Activated naive CD4-positive, alpha-beta T cell treated with anti-CD3 and anti-CD28 coated beads for 36 hours (primary cell): ENCODE measurements at regions of chr3 and their contacts with region 1.

Region 1: GRCh38 chr3:16950845-16951244 is 66.1 kb downstream of the PLCL2 start:
- DNase-seq: no peak
- H3K4me3 Mint-ChIP-seq: no peak overlapping the region
- H3K27ac Mint-ChIP-seq: no peak overlapping the region
- H3K4me1 Mint-ChIP-seq: peaks cover 40% of the 10 kb centered on the region
- H3K27me3 Mint-ChIP-seq: no peaks in the 10 kb centered on the region

Region 2: DNA sequence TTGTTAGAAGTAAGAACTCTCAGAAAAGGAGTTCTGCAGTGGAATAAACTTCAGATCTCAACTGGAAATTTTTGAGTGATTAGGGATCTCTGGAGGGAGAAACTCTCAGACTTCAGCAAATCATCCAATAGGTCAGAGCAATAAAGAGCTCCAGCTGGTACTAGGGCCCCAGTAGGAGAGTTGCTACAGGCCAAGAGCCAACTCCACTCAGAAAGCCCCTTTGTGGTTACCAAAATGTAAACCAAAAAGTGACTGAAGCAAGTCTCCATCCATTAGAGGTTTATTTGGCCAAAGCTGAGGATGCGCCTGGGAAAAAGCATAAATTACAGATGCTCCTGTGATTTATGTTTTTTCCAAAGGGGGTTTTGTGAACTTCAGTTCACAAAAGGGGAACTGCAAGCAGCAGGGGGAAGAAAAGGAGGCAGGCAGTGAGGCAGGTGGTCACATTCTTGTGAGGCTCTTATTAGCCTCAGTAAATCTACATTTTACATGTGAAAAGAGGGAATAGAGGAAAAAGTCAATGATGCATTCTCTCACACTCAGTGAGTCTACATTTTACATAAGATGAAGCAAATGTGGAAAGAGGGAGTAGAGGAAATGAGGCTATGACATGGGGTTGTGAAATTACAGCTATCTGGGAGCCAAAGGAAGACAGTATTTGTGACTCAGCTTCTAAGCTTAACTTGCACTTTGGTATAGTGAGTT is 253.2 kb before region 1 on chr3:
- CTCF ChIA-PET with region 1: no interaction called
- intact Hi-C with region 1: no loop called
- DNase-seq: no peak
- H3K4me3 Mint-ChIP-seq: no peak overlapping the region
- H3K27ac Mint-ChIP-seq: no peak overlapping the region
- H3K4me1 Mint-ChIP-seq: no peaks in the 10 kb centered on the region
- H3K27me3 Mint-ChIP-seq: no peaks in the 10 kb centered on the region

Region 3: GRCh38 chr3:16999871-17000270 is 49.0 kb after region 1 on chr3:
- CTCF ChIA-PET with region 1: no interaction called
- intact Hi-C with region 1: loop called (anchors 5 kb)
- DNase-seq: no peak
- H3K4me3 Mint-ChIP-seq: no peak overlapping the region
- H3K27ac Mint-ChIP-seq: no peak overlapping the region
- H3K4me1 Mint-ChIP-seq: peaks cover 66% of the 10 kb centered on the region
- H3K27me3 Mint-ChIP-seq: no peaks in the 10 kb centered on the region